Activated CD4-positive, alpha-beta T cell treated with anti-CD3 and anti-CD28 coated beads for 36 hours (primary cell): ENCODE measurements at regions of chr3 and their contacts with region 1.

Region 1: GRCh38 chr3:48301020-48301796 is 32.3 kb downstream of the SPINK8 start:
- DNase-seq: peak; percentile 97
- ATAC-seq: peak; percentile 85
- H3K4me3 Mint-ChIP-seq: peak within 1 kb of the TSS; percentile 92
- H3K27ac Mint-ChIP-seq: peak within 1 kb of the TSS; percentile 98
- H3K4me1 Mint-ChIP-seq: peaks cover 27% of the 10 kb centered on the region
- H3K27me3 Mint-ChIP-seq: no peaks in the 10 kb centered on the region

Region 2: DNA sequence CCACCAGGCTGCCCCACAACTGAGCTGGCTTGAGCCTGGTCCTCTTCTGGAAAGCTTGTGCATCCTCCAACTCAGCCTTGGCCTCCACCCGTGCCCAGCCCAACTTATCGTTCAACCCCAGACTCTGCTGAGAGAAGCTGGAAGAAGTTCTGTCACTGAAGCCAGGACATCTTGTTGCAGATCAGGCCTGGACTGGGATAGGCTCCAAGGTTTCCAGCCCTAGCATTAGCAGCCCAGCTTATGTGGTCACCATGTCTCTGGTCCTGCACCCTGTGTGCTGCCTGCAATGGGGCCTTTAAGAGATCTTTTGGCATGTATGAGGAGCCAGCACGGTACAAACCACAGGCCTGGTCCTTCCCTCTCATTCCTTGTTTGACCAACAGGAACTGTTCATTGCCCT is 93.1 kb before region 1 on chr3:
- CTCF ChIA-PET with region 1: no interaction called
- POLR2A ChIA-PET with region 1: no interaction called
- intact Hi-C with region 1: no loop called
- DNase-seq: no peak
- ATAC-seq: no peak
- H3K4me3 Mint-ChIP-seq: no peak overlapping the region
- H3K27ac Mint-ChIP-seq: no peak overlapping the region
- H3K4me1 Mint-ChIP-seq: no peaks in the 10 kb centered on the region
- H3K27me3 Mint-ChIP-seq: no peaks in the 10 kb centered on the region

Region 3: GRCh38 chr3:48268381-48269183 is 32.6 kb before region 1 on chr3:
- CTCF ChIA-PET with region 1: interaction called, 3 read pairs
- POLR2A ChIA-PET with region 1: interaction called, 3 read pairs
- intact Hi-C with region 1: loop called (anchors 1 kb)
- DNase-seq: peak; percentile 95
- ATAC-seq: peak; percentile 91
- H3K4me3 Mint-ChIP-seq: peak overlapping the region; percentile 57
- H3K27ac Mint-ChIP-seq: peak overlapping the region; percentile 92
- H3K4me1 Mint-ChIP-seq: peaks cover 39% of the 10 kb centered on the region
- H3K27me3 Mint-ChIP-seq: no peaks in the 10 kb centered on the region

Region 4: GRCh38 chr3:48765376-48765775 is 464.2 kb after region 1 on chr3:
- CTCF ChIA-PET with region 1: no interaction called
- POLR2A ChIA-PET with region 1: no interaction called
- intact Hi-C with region 1: no loop called
- DNase-seq: no peak
- ATAC-seq: no peak
- H3K4me3 Mint-ChIP-seq: no peak overlapping the region
- H3K27ac Mint-ChIP-seq: no peak overlapping the region
- H3K4me1 Mint-ChIP-seq: no peaks in the 10 kb centered on the region
- H3K27me3 Mint-ChIP-seq: no peaks in the 10 kb centered on the region